Activated naive CD4-positive, alpha-beta T cell treated with anti-CD3 and anti-CD28 coated beads, Interleukin-2, amount 10 ng/mL, durations not matched to agents 7 days and 5 days (primary cell): ENCODE measurements at regions of chr9 and their contacts with region 1.

Region 1: DNA sequence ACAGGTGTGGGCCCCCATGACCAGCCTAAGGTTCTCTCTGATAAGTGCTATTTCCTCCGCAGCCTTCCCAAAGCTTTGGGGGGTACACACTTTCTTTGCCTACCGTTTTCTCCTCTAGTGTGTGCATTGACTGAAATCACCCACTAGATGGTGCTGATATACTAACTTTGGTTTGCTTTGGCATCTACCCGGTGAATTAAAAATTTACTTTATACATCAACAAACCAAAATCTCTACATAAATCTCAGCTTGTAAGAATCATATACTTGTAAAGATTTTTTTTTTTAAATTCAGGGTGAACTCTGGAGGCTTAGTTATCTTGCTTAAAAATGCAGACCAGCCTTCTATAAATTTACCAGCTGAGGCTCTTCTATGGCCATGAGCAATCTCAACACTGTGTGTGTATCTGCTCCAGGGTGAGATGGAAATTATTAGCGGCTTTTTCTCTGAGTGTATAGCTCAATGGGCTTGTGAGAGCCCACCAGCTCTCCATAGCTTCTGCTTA is 475.7 kb upstream of the TNC start:
- DNase-seq: no peak
- H3K4me3 Mint-ChIP-seq: no peak overlapping the region
- H3K27ac Mint-ChIP-seq: no peak overlapping the region
- H3K4me1 Mint-ChIP-seq: no peaks in the 10 kb centered on the region
- H3K27me3 Mint-ChIP-seq: peaks cover 10% of the 10 kb centered on the region

Region 2: GRCh38 chr9:115717711-115718173 is 124.1 kb after region 1 on chr9:
- CTCF ChIA-PET with region 1: no interaction called
- DNase-seq: no peak
- H3K4me3 Mint-ChIP-seq: no peak overlapping the region
- H3K27ac Mint-ChIP-seq: no peak overlapping the region
- H3K4me1 Mint-ChIP-seq: no peaks in the 10 kb centered on the region
- H3K27me3 Mint-ChIP-seq: no peaks in the 10 kb centered on the region

Region 3: GRCh38 chr9:116572095-116572748 is 978.6 kb after region 1 on chr9:
- CTCF ChIA-PET with region 1: interaction called, 12 read pairs
- DNase-seq: peak; percentile 47
- H3K4me3 Mint-ChIP-seq: no peak overlapping the region
- H3K27ac Mint-ChIP-seq: no peak overlapping the region
- H3K4me1 Mint-ChIP-seq: no peaks in the 10 kb centered on the region
- H3K27me3 Mint-ChIP-seq: no peaks in the 10 kb centered on the region